Psoas muscle (tissue), 8 donors: ENCODE measurements at regions of chr2 and their contacts with region 1.

Region 1: DNA sequence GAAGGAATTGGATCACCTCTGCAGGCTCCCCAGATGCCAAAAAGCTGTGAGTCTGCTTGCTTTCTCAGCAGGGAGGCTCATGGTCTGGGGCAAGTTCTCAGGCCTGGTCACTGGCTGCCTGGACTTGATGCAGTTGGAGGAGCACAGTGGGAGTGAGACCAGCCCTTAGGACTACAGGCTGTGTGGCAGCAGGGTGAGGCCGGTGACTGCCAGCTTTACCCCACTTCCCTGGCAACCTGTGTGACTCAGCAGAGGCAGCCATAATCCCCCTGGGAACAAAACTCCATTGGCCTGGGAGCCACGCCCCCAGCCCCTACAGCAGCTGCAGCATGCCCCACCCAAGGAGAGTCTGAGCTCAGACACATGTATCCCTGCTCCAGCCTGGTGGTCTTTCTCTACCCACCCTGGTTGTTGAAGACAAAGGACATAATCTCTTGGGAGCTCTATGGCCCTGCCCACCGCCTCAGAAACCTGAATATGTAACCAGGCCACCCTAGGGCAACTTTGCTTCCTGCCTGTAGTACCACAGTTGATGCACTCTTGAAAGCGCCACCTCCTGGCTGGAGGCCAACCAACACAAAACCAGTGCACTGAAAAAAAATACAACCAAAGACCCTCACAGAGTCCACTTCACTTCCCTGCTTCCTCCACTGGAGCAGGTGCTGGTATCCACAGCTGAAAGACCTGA is 106.8 kb upstream of the SPATS2L start:
- DNase-seq: no peak
- ATAC-seq: no peak
- H3K4me3 ChIP-seq: no peak overlapping the region
- H3K27ac ChIP-seq: no peak overlapping the region
- H3K4me1 ChIP-seq: no peaks in the 10 kb centered on the region
- H3K27me3 ChIP-seq: no peaks in the 10 kb centered on the region
- CTCF ChIP-seq: no peak

Region 2: GRCh38 chr2:200165687-200166086 is 34.0 kb before region 1 on chr2:
- intact Hi-C with region 1: loop called in 1 of 2 experiments (anchors 2 kb)
- DNase-seq: no peak
- ATAC-seq: no peak
- H3K4me3 ChIP-seq: no peak overlapping the region
- H3K27ac ChIP-seq: no peak overlapping the region
- H3K4me1 ChIP-seq: no peaks in the 10 kb centered on the region
- H3K27me3 ChIP-seq: no peaks in the 10 kb centered on the region
- CTCF ChIP-seq: no peak